Ovary (tissue), 10 donors: ENCODE measurements at regions of chr18 and their contacts with region 1.

Region 1: GRCh38 chr18:21191596-21192307 is 50.3 kb upstream of the GREB1L start:
- DNase-seq: peak in 2 of 5 donors; percentile 25
- H3K4me3 ChIP-seq: no peak overlapping the region
- H3K27ac ChIP-seq: no peak overlapping the region
- H3K4me1 ChIP-seq: no peaks in the 10 kb centered on the region
- H3K27me3 ChIP-seq: no peaks in the 10 kb centered on the region
- CTCF ChIP-seq: no peak
- EP300 ChIP-seq: no peak
- POLR2A ChIP-seq: no peak

Region 2: GRCh38 chr18:21049306-21049705 is 142.4 kb before region 1 on chr18:
- intact Hi-C with region 1: no loop called
- DNase-seq: no peak
- H3K4me3 ChIP-seq: no peak overlapping the region
- H3K27ac ChIP-seq: no peak overlapping the region
- H3K4me1 ChIP-seq: peaks cover 6% of the 10 kb centered on the region
- H3K27me3 ChIP-seq: no peaks in the 10 kb centered on the region
- CTCF ChIP-seq: no peak
- EP300 ChIP-seq: no peak
- POLR2A ChIP-seq: no peak

Region 3: DNA sequence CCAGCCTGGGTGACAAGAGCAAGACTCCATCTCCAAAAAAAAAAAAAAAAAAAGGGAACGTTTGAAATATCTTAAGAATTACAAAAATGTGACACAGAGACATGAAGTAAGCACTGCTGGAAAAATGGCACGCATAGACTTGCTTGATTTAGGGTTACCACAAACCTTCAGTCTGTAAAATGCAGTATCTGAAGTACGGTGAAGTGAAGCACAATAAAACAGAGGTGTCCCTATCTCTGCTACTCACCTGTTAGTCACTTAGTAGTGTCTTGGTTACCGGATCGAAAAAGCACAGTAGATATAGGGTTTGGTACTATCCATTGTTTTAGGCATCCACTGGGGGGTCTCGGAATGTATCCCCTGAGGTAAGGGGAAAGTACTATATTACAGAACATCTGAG is 38.7 kb after region 1 on chr18:
- intact Hi-C with region 1: no loop called
- DNase-seq: no peak
- H3K4me3 ChIP-seq: no peak overlapping the region
- H3K27ac ChIP-seq: no peak overlapping the region
- H3K4me1 ChIP-seq: no peaks in the 10 kb centered on the region
- H3K27me3 ChIP-seq: no peaks in the 10 kb centered on the region
- CTCF ChIP-seq: no peak
- EP300 ChIP-seq: no peak
- POLR2A ChIP-seq: no peak

Region 4: DNA sequence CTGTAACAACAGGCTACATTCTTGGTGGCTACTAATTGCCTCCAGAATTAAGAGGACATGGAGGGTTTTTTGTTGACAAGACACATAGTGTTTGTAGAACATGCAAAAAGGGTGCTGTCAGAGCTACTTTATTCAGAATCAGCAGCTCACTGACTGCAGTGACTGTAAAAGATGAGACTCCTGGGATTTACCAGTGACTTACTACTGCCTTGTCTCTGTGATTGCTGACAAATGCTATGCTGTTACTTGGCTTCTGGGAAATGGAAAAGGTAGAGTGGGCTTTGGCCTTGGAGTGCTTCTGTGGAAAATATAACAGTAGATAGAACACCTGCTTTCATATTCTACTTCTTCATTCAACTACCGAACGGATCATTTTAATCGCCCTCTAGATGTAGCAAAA is 98.1 kb after region 1 on chr18:
- intact Hi-C with region 1: no loop called
- DNase-seq: no peak
- H3K4me3 ChIP-seq: no peak overlapping the region
- H3K27ac ChIP-seq: no peak overlapping the region
- H3K4me1 ChIP-seq: peaks cover 4% of the 10 kb centered on the region
- H3K27me3 ChIP-seq: no peaks in the 10 kb centered on the region
- CTCF ChIP-seq: no peak
- EP300 ChIP-seq: no peak
- POLR2A ChIP-seq: no peak

Region 5: GRCh38 chr18:21303913-21304312 is 112.2 kb after region 1 on chr18:
- intact Hi-C with region 1: no loop called
- DNase-seq: no peak
- H3K4me3 ChIP-seq: no peak overlapping the region
- H3K27ac ChIP-seq: no peak overlapping the region
- H3K4me1 ChIP-seq: peaks cover 3% of the 10 kb centered on the region
- H3K27me3 ChIP-seq: no peaks in the 10 kb centered on the region
- CTCF ChIP-seq: no peak
- EP300 ChIP-seq: no peak
- POLR2A ChIP-seq: no peak

Region 6: DNA sequence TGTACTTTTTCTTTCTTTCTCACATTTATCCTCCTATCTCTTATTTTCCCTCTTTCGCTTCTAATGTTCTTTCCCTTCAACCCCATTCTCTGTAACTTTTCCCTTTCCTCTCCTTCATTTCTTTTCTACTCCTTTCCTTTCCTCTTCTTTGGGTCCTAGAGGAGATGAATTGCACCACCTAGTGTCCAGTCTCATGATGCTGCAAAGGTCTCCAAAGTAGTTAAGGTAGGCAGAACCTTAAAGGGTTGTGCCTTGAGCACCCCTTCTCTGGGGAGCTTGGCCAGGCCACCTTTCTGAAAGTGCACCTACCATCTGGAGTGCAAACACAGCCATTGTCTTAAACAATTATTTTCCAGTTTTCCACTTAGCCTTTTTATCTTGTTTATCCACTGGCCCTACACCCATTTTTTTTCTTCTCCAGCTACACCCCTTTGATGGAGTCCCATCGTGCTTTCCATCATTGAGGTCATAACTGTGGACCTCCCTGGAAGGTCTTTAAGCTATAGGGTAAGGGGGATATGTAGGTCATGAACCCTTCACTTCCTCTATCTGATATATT is 252.8 kb after region 1 on chr18:
- intact Hi-C with region 1: loop called in 3 of 4 experiments (anchors 2 to 5 kb)
- DNase-seq: peak in 3 of 5 donors; percentile 23 to 51 (median 35)
- H3K4me3 ChIP-seq: no peak overlapping the region
- H3K27ac ChIP-seq: no peak overlapping the region
- H3K4me1 ChIP-seq: no peaks in the 10 kb centered on the region
- H3K27me3 ChIP-seq: no peaks in the 10 kb centered on the region
- CTCF ChIP-seq: peak; percentile 54 to 72 (median 57)
- EP300 ChIP-seq: no peak
- POLR2A ChIP-seq: no peak

Region 7: GRCh38 chr18:21955757-21956652 is 764.3 kb after region 1 on chr18:
- intact Hi-C with region 1: loop called in 1 of 4 experiments (anchors 5 kb)
- DNase-seq: peak; percentile 66 to 87 (median 81)
- H3K4me3 ChIP-seq: no peak overlapping the region
- H3K27ac ChIP-seq: no peak overlapping the region
- H3K4me1 ChIP-seq: no peaks in the 10 kb centered on the region
- H3K27me3 ChIP-seq: no peaks in the 10 kb centered on the region
- CTCF ChIP-seq: peak; percentile 57 to 67 (median 65)
- EP300 ChIP-seq: no peak
- POLR2A ChIP-seq: no peak